Heart right ventricle (tissue), 16 donors: ENCODE measurements at regions of chr1 and their contacts with region 1.

Region 1: GRCh38 chr1:175742790-175743459 is 470 bp downstream of the TNR start:
- DNase-seq: peak in 1 of 2 donors; percentile 6
- ATAC-seq: peak in 6 of 8 donors; percentile 38 to 74 (median 58)
- H3K4me3 ChIP-seq: no peak overlapping the region
- H3K27ac ChIP-seq: no peak overlapping the region
- H3K4me1 ChIP-seq: peaks cover 0 to 4% (median 0%) of the 10 kb centered on the region in 9 donors
- H3K27me3 ChIP-seq: peaks cover 0 to 49% (median 13%) of the 10 kb centered on the region in 7 donors
- CTCF ChIP-seq: no peak

Region 2: GRCh38 chr1:175471039-175471800 is 271.7 kb before region 1 on chr1:
- intact Hi-C with region 1: loop called in 1 of 10 experiments (anchors 10 kb)
- DNase-seq: no peak
- ATAC-seq: no peak
- H3K4me3 ChIP-seq: no peak overlapping the region
- H3K27ac ChIP-seq: no peak overlapping the region
- H3K4me1 ChIP-seq: no peaks in the 10 kb centered on the region
- H3K27me3 ChIP-seq: peaks cover 0 to 15% (median 5%) of the 10 kb centered on the region in 7 donors
- CTCF ChIP-seq: no peak

Region 3: DNA sequence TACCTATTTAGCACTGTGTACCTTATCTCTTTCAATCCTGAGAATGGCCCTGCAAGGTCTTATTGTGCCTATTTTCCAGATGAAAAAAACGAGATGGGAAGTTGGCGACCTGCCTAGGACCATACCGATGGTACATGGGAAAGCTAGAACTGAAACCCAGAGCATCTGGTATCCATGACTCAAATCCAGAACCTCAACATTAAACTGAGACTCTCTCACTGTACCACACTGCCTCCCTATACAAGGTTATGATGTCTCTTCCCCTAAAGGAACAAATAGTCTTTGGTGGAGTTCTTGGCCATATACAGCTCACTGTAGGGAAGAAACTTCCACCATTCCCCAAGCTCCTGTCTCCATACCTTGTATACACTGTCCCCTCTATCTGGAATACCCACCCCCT is 110.3 kb before region 1 on chr1:
- intact Hi-C with region 1: no loop called
- DNase-seq: no peak
- ATAC-seq: no peak
- H3K4me3 ChIP-seq: no peak overlapping the region
- H3K27ac ChIP-seq: no peak overlapping the region
- H3K4me1 ChIP-seq: no peaks in the 10 kb centered on the region
- H3K27me3 ChIP-seq: peaks cover 0 to 9% (median 0%) of the 10 kb centered on the region in 7 donors
- CTCF ChIP-seq: no peak

Region 4: DNA sequence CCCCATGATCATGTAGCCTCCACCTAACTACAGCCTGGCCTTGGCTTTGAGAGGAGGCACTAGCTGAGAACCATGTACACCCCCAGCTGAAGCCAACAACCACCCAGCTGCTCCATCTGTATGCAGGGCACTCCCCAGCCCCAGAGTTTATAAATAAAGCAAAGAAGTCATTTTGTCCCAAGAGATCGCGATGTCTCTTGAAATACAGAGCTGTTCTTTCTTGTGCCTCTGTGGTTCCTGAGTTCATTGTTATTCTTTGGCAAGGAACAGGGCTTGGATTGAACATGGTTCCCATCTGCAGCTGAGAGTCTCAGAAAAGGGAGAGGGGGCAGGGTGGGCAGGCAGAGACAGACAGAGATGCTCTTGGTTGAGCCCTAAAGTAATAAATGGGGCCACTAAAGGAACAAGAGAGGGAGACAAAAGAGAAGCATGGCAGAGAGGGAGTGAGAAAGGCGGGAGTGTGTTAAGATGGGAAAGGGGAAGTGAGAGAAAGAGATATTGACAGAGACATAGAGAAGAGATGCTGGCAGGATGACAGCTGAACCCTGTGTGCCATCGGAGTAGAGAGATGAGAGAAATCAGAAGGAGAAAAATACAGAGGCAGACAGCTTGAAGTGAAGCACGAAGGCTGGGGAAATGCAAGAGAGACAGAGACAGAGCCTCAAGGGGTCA is 62.8 kb before region 1 on chr1:
- intact Hi-C with region 1: no loop called
- DNase-seq: no peak
- ATAC-seq: no peak
- H3K4me3 ChIP-seq: no peak overlapping the region
- H3K27ac ChIP-seq: no peak overlapping the region
- H3K4me1 ChIP-seq: no peaks in the 10 kb centered on the region
- H3K27me3 ChIP-seq: peaks cover 0 to 33% (median 6%) of the 10 kb centered on the region in 7 donors
- CTCF ChIP-seq: no peak

Region 5: DNA sequence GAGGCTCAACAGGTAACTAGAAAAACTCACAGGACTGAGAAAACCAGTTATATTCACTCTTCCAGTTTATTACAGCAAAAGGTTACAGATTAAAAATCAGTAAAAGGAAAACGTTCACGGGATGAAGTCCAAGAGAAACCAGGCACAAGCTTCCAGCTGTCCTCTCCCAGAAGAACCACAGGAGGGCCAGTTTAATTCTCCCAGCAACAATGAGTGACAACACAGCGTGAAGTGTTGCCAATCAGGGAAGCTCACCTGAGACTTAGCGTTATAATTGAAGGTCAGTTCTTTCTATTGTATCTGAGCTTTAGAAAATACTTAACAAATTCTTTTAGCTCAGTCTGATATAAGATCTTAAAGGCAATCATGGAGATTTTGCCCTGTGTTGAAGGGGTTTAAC is 65.6 kb after region 1 on chr1:
- intact Hi-C with region 1: no loop called
- DNase-seq: no peak
- ATAC-seq: no peak
- H3K4me3 ChIP-seq: no peak overlapping the region
- H3K27ac ChIP-seq: no peak overlapping the region
- H3K4me1 ChIP-seq: peaks cover 0 to 9% (median 0%) of the 10 kb centered on the region in 9 donors
- H3K27me3 ChIP-seq: no peaks in the 10 kb centered on the region
- CTCF ChIP-seq: no peak

Region 6: DNA sequence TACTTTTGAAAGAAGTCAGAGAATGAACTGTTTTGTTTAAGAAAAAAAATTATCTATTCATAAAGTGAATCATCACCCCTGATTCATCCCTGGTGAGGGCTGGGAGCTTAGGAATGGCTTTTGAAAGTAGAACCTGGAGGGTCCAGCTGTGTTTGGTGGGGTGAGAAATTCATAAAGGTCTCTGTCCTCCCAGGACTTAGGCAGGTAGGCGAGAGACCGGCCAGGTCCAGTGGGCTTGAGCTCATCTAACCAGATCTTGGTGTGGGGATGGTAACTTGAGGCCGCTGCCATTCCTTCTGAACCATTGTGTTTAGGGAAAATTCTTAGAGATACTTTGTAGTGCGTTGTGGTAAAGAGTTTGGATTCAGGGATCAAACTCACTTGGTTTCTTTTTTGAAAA is 157.2 kb after region 1 on chr1:
- intact Hi-C with region 1: no loop called
- DNase-seq: no peak
- ATAC-seq: no peak
- H3K4me3 ChIP-seq: no peak overlapping the region
- H3K27ac ChIP-seq: no peak overlapping the region
- H3K4me1 ChIP-seq: no peaks in the 10 kb centered on the region
- H3K27me3 ChIP-seq: no peaks in the 10 kb centered on the region
- CTCF ChIP-seq: no peak